ENCODE measurements at regions of chr10 and their contacts with region 1.

Region 1: DNA sequence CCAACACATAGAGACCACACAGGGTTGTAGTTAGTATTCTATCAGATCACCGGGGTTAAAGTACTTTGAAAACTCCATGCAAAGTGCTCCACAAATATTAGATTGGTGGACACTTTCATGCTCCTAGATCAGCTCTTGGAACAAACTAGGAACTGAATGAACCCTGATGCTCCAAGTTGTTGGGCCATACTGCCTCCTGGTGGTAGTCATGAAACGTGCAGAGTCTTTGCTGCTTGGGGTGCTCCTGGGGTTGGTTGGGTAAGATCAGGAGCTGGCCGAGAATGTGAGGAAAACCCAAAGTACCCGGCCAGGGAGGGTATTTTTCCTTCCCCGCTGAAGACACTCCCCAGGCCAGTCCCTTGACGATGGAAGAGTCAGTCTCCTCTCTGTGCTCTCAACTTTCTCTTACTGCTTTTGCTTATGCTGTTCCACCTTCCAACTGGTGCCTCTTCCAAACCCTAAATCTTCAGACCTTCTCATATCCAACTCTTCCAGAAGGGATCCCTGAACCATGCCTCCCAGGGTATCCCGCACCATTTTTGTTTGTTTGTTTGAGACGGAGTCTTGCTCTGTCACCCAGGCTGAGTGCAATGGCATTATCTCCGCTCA is 920 bp upstream of the RPEL1 start:
- DNase-seq: peak; percentile 61 to 88
- H3K4me3 ChIP-seq: no peak overlapping the region
- H3K27ac ChIP-seq: no peak overlapping the region
- H3K4me1 ChIP-seq: peaks cover 2 to 8% (median 6%) of the 10 kb centered on the region in 4 experiments; a peak in 5 of 7 replicates
- H3K27me3 ChIP-seq: no peaks in the 10 kb centered on the region
- CTCF ChIP-seq: peak; percentile 84 to 99 (median 89)
- EP300 ChIP-seq: no peak
- POLR2A ChIP-seq: no peak
- RAD21 ChIP-seq: peak; percentile 98 to 100

Region 2: DNA sequence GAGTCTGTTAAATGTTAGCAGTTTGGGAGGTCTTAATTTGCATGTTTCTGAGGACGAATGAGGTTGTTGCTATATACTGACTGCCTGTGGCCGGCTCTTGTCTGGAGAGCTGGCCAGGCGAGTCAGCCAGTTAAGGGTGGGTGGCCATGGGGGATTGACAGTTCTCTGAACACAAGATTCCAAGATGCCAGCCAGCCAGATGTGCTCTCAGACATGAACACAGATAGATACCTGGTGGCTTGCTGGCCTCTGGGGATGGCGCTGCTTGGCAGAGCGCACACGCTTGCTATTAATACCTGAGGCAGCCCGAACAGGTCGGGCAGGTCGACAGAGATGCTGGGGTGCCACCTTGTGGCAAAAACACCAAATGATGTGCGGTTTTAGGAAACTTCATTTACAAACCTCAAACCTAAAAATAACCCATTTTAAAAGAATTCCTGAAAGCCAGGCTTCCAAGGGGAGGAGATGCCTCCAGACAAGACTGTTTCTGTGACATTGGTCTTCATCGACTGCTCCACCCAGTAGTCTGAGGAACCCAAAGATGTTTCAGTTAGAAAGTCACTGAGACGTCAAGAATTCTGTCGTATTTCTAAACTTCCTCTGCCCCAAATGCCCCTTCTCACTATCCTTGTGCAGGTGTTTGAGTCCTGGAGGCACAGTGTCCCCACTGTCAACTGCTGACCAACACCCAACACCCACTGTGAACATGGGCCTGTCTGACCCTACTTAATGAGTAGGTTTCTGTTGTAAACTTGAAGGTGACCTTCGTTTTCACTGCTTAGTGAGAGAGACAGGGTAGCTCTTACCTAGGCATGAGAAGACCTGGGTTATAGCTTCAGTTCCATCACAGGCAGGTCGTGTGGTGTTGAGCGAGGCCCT is 175.1 kb before region 1 on chr10:
- CTCF ChIA-PET with region 1: interaction called, 24 read pairs
- POLR2A ChIA-PET with region 1: no interaction called
- DNase-seq: peak; percentile 33 to 83
- H3K4me3 ChIP-seq: no peak overlapping the region
- H3K27ac ChIP-seq: no peak overlapping the region
- H3K4me1 ChIP-seq: no peaks in the 10 kb centered on the region
- H3K27me3 ChIP-seq: no peaks in the 10 kb centered on the region
- CTCF ChIP-seq: peak; percentile 69 to 85 (median 73)
- EP300 ChIP-seq: no peak
- POLR2A ChIP-seq: no peak
- RAD21 ChIP-seq: peak; percentile 95 to 96

Region 3: GRCh38 chr10:103086799-103087198 is 158.0 kb before region 1 on chr10:
- CTCF ChIA-PET with region 1: interaction called, 30 read pairs
- POLR2A ChIA-PET with region 1: no interaction called
- DNase-seq: no peak
- H3K4me3 ChIP-seq: no peak overlapping the region
- H3K27ac ChIP-seq: no peak overlapping the region
- H3K4me1 ChIP-seq: no peaks in the 10 kb centered on the region
- H3K27me3 ChIP-seq: no peaks in the 10 kb centered on the region
- CTCF ChIP-seq: peak; percentile 22 to 40 (median 24)
- EP300 ChIP-seq: no peak
- POLR2A ChIP-seq: no peak
- RAD21 ChIP-seq: peak; percentile 44 to 63

Region 4: GRCh38 chr10:103102195-103102594 is 142.6 kb before region 1 on chr10:
- CTCF ChIA-PET with region 1: interaction called, 13 read pairs
- POLR2A ChIA-PET with region 1: no interaction called
- DNase-seq: no peak
- H3K4me3 ChIP-seq: no peak overlapping the region
- H3K27ac ChIP-seq: no peak overlapping the region
- H3K4me1 ChIP-seq: peaks cover 0 to 4% (median 0%) of the 10 kb centered on the region in 4 experiments; a peak in 1 of 7 replicates
- H3K27me3 ChIP-seq: no peaks in the 10 kb centered on the region
- CTCF ChIP-seq: no peak
- EP300 ChIP-seq: no peak
- POLR2A ChIP-seq: no peak
- RAD21 ChIP-seq: no peak

Region 5: DNA sequence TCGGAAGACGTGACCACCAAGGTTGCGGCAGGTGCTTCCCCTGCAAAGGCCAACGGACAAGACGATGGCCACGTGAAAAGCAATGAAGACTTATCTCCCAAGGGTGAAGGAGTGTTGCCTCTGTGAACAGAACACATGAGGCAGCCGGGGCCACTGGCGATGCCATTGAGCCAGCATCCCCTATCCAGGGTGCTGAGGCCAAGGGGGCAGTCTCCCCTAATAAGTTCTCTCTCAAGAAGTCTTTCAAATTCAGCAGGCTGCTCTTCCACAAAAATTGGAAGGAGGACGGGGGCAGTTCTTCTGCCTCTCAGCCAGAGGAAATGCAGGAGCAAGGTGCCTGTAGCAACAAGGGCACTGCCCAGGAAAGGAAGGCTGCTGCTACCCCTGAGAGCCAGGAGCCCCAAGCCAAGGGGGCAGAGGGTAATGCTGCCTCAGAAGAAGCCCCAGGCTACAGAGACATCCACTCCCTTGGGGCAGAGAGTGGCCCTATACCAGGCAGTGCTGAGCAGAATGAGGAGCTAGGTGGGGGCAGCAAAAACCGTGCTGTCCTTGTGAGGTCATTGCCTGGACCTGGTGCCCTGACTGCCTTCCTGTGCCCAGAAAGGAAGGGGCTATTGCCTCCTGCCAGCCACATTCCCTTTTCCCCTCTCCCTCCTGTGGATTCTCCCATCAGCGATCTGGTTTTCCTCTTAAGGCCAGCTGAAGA is 69.0 kb before region 1 on chr10:
- CTCF ChIA-PET with region 1: interaction called, 10 read pairs
- POLR2A ChIA-PET with region 1: no interaction called
- DNase-seq: peak in 1 of 2 experiments; percentile 47
- H3K4me3 ChIP-seq: no peak overlapping the region
- H3K27ac ChIP-seq: no peak overlapping the region
- H3K4me1 ChIP-seq: peaks cover 0 to 3% (median 1%) of the 10 kb centered on the region in 4 experiments; a peak in 1 of 7 replicates
- H3K27me3 ChIP-seq: no peaks in the 10 kb centered on the region
- CTCF ChIP-seq: no peak
- EP300 ChIP-seq: no peak
- POLR2A ChIP-seq: no peak
- RAD21 ChIP-seq: no peak; a peak in 1 of 4 replicates

Region 6: DNA sequence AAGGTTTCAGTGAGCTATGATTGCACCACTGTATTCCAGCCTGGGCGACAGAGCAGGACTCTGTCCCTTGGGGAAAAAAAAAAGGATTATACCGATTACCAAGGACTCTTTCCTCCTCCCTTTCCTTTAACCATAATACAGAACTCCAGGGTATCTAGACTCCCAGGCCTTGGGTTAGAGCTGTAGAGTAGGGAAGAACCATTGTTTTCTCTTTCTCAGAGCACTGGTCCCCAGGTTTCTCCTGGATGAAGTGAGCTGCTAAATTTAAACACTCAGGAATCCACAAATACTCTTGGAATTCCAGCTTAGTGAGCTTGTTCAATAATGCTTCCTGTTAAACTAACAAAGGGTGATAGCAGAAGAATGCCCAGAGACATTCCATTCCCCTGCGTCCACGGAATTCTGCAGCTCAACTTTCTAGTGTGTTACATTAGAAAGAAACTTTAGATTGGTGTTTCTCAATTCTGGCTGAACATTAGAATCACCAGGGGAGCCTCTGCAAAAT is 13.7 kb before region 1 on chr10:
- CTCF ChIA-PET with region 1: interaction called, 15 read pairs
- POLR2A ChIA-PET with region 1: interaction called, 4 read pairs
- DNase-seq: peak in 1 of 2 experiments; percentile 85
- H3K4me3 ChIP-seq: no peak overlapping the region
- H3K27ac ChIP-seq: no peak overlapping the region; the same call in 1 of the 2 replicates
- H3K4me1 ChIP-seq: peaks cover 0 to 18% (median 2%) of the 10 kb centered on the region in 4 experiments; a peak in 3 of 7 replicates
- H3K27me3 ChIP-seq: no peaks in the 10 kb centered on the region; a peak in 1 of 7 replicates
- CTCF ChIP-seq: no peak
- EP300 ChIP-seq: peak in 1 of 2 experiments; percentile 80; a peak in 1 of 3 replicates
- POLR2A ChIP-seq: no peak
- RAD21 ChIP-seq: peak in 1 of 2 experiments; percentile 1; a peak in 1 of 4 replicates